ENCODE measurements at regions of chr1 and their contacts with region 1.

Region 1: DNA sequence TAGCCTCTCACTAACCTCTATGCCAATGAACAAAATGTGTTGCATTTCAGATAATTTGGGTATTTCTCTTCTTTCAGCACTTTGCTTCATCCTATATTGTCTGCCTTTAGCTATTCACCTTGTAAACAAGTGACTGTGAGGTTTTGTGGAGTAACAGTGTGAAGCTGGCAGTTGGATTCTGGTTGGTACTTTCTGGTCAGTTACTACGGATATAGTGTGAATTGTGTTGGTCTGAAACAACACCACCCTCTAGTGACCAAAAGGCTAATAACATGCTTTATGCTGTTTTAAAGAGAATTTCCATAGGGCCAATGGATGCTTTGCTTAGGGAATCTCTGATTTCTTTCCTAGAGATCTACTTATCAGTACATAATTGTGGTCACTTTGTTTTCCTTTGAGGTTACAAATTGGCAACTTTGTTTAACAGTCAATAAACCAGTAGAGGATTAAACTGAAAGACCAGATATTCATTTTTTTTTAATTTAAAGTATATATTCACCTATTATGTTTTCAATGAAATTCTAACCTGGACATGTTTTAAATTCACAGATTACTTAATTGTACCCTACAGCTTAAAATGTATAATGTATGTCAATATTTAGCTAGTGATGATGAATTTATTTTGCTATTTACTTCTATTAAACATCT is 2.5 kb upstream of the PTGER3 start:
- DNase-seq: no peak
- ATAC-seq: peak; percentile 35 to 45

Region 2: DNA sequence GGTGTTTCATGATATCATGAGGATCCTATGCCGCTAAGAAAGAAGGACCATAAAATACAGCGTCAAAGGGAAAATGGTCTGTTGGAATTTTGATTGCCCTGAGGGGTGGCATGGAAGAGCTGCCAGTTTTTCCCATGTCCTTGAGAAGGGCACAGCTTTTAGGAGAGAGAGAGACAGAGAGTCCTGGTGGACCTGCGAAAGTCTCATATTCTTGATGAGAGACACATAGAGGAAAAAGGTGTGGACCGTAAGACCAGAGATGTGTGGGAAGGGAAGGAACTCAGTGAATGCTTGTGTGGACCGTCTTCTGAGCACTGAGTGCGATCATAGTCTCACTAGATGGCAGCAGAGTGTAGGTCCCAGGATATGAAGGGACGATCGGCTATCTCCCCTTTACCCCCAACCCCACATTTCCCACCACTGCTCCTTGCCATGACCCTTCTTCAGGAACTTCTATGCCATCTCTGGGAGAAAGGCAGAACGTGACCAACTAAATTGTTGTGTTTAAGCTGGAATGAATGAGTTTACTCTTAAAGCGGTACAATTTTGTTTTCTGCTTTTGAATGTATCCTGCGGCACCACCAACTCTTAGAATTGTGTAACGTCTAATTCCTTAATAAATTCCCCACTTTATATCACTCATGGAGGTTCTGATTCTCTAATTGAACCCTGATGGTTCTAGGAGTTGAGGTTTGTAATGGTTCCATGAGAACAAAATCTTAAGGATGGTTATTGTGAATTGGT is 521.3 kb before region 1 on chr1:
- intact Hi-C with region 1: loop called in 1 of 2 experiments (anchors 2 kb)
- DNase-seq: no peak
- ATAC-seq: peak; percentile 61 to 73

Region 3: DNA sequence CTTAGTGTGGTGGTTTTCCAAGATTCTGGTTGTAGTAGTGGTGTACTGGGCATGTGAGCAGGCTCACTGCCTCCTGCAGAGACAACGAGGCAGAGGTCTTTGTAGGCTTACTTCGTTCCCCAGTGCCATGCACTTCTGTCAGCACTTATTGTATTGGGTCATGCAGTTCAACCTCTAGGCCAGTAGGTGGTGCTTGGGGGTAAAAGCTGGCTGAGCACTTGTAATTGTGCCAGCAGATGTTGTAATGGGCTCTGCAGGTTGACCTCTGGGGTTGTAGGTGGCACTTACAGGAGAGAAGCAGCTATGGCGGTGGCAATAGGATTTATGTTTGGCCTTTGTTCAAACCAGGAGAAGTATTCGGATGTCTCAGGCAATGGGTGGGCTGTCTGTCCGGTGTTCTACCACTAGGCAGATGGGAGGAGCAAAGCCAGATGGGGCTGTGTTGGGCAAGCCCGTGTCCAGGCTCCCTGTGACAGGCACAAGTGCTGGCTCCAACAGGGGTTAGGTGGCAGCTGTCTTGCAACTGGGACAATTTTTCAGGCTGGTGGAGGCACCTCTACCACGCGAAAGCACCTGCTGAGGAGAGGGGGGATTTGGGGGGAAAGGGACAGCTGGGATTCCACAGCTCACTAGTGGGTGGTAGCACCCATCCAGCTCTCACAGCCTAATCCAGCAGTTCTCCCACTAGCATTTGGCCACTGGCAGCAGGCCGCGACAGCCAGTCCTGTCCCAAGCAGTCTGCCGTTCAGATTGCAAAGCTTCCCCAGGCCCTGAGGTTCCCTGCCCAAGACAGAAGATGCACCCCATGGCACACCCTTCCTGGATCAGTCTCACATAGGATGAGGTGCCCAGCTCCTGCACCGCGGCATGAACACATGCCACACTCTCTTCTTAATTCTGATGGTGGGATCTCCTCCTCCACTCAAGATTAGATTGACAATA is 364.5 kb before region 1 on chr1:
- intact Hi-C with region 1: loop called (anchors 2 to 5 kb)
- DNase-seq: peak; percentile 55
- ATAC-seq: peak; percentile 79 to 83

Region 4: GRCh38 chr1:70945251-70945650 is 104.8 kb before region 1 on chr1:
- intact Hi-C with region 1: no loop called
- DNase-seq: no peak
- ATAC-seq: no peak

Region 5: DNA sequence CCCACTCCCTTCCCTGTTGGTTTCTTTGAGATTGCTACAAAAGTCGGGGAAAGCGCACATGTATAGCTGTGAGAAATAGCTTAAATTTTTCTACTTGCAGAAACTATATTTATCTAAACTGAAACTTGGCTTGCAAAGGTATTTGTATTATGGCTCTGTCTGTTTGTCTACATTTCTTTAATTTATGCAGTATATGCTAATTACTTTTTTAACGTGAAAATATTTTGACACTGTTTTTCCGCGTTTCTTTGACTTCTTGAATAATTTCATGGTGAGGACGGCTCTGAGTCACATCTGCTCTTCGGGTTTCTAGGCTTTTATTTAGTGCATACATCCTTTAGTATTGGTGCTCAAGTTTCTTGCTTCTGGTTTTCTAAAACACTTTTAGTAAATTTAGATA is 212.9 kb after region 1 on chr1:
- intact Hi-C with region 1: no loop called
- DNase-seq: no peak
- ATAC-seq: no peak

Measured in left cardiac atrium (tissue), 4 donors.